ENCODE measurements at regions of chr2 and their contacts with region 1.

Region 1: GRCh38 chr2:68909793-68910674 is 38.8 kb upstream of the BMP10 start:
- DNase-seq: peak; percentile 48 to 82
- H3K4me3 ChIP-seq: no peak overlapping the region
- H3K4me1 ChIP-seq: peaks cover 18% of the 10 kb centered on the region
- H3K27me3 ChIP-seq: no peaks in the 10 kb centered on the region

Region 2: GRCh38 chr2:68726608-68727367 is 183.2 kb before region 1 on chr2:
- in situ Hi-C with region 1: loop called (anchors 25 kb)
- DNase-seq: no peak
- H3K4me3 ChIP-seq: no peak overlapping the region
- H3K4me1 ChIP-seq: no peaks in the 10 kb centered on the region
- H3K27me3 ChIP-seq: no peaks in the 10 kb centered on the region

Measured in HAP-1 (cell line).